Activated B cell treated with CpG ODN at 0.5 μM for 24 hours (primary cell): ENCODE measurements at regions of chr14 and their contacts with region 1.

Region 1: DNA sequence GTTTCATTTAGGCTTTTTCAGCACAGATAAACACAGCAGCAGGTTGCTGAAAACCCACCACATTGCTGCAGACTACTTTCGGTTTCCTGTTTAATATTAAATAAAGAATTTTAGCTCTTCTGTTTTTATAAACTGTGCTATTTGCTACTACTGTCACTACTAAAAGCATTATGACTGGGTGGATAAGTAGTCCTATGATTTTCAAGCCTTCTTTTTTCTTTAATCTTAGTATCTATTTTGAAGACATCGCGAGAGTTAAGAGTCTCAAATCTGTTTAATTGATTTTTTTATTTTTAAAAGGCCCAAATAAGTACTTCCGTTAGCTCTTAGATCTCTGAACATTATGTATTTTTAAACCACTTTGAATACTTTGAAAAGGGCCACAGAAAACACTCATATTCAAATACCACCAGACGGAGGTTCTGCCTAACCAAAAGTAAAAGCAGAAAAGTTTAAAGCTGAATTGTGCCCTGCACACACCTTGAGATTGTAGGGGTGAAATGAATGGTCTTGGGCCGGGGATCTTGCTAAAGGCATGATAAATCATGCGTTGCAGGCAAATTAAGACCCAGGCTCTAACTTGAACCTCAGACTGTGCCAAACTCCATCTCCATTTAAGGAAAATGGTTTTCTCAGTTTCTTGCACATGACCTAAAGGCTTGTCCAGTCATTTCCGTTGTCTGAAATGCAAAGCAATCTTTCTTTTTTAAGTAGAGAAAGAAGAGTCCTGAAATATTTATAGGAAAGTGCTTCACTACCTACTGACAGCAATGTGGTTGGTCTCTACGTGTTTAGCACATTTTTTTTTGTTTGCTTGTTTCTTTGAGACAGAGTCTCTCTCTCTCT is 13.6 kb upstream of the FOXN3 start:
- DNase-seq: no peak
- ATAC-seq: peak; percentile 93
- H3K4me3 Mint-ChIP-seq: peak overlapping the region; percentile 80
- H3K27ac Mint-ChIP-seq: peak overlapping the region; percentile 86
- H3K4me1 Mint-ChIP-seq: peaks cover 83% of the 10 kb centered on the region
- H3K27me3 Mint-ChIP-seq: no peaks in the 10 kb centered on the region
- CTCF ChIP-seq: no peak

Region 2: DNA sequence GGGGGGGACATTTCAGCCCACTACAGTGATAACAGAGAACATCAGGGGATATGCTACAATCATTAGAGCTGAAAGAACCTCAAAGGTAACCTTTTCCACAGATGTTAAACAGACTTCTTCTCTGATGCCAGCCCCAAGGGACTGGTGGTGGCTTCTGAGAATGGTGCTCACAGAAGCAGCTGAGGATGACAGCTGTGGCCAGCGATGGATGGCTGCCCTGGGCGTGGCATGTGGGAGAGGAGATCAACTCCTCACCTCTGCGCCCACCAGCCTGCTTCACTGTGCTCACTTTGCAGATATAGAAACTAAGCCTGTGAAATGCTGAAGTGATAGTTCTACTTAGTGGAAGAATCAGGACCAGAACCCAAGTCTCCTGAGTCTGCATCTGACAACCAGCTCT is 46.6 kb before region 1 on chr14:
- CTCF ChIA-PET with region 1: no interaction called
- POLR2A ChIA-PET with region 1: interaction called, 16 read pairs
- intact Hi-C with region 1: loop called (anchors 1 kb)
- DNase-seq: peak; percentile 79
- ATAC-seq: peak; percentile 95
- H3K4me3 Mint-ChIP-seq: peak overlapping the region; percentile 36
- H3K27ac Mint-ChIP-seq: peak overlapping the region; percentile 87
- H3K4me1 Mint-ChIP-seq: peaks cover 79% of the 10 kb centered on the region
- H3K27me3 Mint-ChIP-seq: no peaks in the 10 kb centered on the region
- CTCF ChIP-seq: no peak

Region 3: DNA sequence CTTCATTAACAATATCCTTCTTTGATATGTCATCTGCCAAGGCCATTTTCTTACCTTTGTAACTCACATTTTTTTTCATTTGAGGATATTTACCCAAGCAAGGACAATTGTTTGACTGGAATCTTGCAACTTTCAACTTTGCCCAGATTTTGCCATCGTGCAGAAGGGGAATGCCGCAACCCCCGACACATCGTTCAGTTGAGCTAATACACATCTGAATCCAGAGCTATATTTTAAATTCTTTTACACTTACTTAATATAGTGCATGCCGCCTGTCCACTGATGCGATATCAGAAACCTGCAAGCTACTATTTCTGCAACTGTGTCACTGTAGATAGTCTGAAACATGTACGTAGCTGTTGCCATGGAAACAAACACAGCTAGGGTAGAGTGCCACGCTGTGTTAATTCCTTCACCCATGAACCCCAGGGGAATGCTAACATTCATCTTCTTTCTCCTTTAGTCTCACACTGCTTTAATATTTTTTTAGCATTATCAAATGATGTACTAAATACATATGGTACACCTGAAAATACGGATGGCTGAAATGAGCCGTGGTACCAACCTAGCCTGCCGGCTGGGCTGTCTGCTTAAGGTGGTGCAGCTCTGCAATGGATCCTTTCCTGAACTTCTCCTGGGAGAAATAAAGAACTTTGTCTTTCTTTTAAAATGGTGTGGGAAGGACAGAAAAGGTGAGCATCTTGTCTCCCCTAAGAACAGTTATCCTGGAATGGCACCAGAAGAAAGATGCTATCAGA is 63.4 kb after region 1 on chr14:
- CTCF ChIA-PET with region 1: interaction called, 3 read pairs
- POLR2A ChIA-PET with region 1: interaction called, 7 read pairs
- intact Hi-C with region 1: loop called (anchors 1 kb)
- DNase-seq: peak; percentile 23
- ATAC-seq: peak; percentile 99
- H3K4me3 Mint-ChIP-seq: peak overlapping the region; percentile 73
- H3K27ac Mint-ChIP-seq: peak overlapping the region; percentile 88
- H3K4me1 Mint-ChIP-seq: peaks cover 26% of the 10 kb centered on the region
- H3K27me3 Mint-ChIP-seq: no peaks in the 10 kb centered on the region
- CTCF ChIP-seq: no peak

Region 4: DNA sequence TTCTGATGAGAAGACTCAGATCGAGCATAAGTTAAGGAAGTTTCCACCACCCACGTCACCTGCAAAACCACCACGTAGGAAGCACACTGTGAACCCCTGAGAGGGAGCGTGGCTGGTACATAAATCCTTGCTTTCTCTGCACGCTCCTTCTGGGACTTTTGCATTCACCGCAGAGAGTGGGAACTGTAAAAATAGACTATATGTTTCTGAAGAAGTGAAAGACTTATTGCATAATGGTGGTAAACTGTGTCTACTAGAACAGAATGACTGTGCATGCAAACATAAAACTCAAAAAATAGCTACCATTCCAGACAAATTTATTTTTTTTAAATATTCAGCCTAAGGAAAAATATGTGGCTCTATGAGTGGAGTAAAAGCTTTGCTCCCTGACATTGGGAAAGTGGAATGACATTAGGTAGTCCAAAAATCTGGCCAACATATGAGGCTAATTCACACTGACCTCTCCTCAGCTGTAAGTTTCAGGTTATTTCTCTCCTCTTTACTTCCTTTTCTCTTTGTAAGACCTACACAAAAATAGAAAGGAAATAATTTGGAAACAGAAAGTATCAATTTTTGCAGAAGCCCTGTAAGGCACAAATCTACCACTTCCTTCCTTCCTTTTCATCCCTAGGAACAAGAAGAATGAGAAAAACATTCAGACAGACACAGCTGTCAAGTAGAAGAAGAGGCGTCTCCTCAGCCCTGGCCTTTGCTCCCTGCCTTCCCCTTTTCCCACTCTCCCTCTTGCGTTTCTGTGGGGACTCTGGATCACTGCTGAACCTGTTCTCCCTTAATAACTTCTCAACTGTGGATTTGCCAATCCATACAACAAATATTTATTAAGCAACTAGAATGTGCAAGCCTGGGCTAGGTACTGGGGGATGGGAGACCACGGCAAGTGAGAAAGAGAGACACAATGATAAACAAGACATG is 250.7 kb after region 1 on chr14:
- CTCF ChIA-PET with region 1: no interaction called
- POLR2A ChIA-PET with region 1: interaction called, 7 read pairs
- intact Hi-C with region 1: loop called (anchors 1 kb)
- DNase-seq: no peak
- ATAC-seq: peak; percentile 84
- H3K4me3 Mint-ChIP-seq: peak overlapping the region; percentile 67
- H3K27ac Mint-ChIP-seq: peak overlapping the region; percentile 80
- H3K4me1 Mint-ChIP-seq: peaks cover 30% of the 10 kb centered on the region
- H3K27me3 Mint-ChIP-seq: no peaks in the 10 kb centered on the region
- CTCF ChIP-seq: no peak

Region 5: DNA sequence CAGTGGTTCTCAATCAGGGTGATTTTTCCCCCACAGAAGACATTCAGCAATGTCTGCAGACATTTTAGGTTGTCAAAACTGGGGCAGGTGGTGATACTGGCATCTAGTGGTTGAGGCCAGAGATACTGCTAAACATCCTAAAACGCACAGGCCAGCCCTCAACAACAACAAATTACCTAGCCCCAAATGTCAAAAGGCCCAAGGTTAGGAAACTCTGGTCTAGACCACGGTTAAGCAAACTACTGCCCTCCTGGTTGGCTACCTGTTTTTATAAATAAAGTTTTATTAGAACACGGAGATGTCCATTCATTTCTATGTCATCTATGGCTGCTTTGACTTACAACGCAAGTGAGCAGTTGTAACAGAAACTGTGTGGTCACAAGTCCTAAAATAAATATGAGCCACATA is 337.3 kb after region 1 on chr14:
- CTCF ChIA-PET with region 1: no interaction called
- POLR2A ChIA-PET with region 1: interaction called, 4 read pairs
- intact Hi-C with region 1: loop called (anchors 1 kb)
- DNase-seq: peak; percentile 28
- ATAC-seq: peak; percentile 92
- H3K4me3 Mint-ChIP-seq: no peak overlapping the region
- H3K27ac Mint-ChIP-seq: peak overlapping the region; percentile 67
- H3K4me1 Mint-ChIP-seq: peaks cover 31% of the 10 kb centered on the region
- H3K27me3 Mint-ChIP-seq: no peaks in the 10 kb centered on the region
- CTCF ChIP-seq: peak; percentile 20